Activated T-helper 1 cell treated with anti-CD3 and anti-CD28 coated beads, Interleukin-12 subunit alpha, Interleukin-12 subunit beta, Interleukin-2, Interleukin-4 antibody, amounts not matched to agents 30 ng/mL and 10 ng/mL and 1 ng/mL, durations not matched to agents 14 hours and 24 hours and 36 hours (primary cell): ENCODE measurements at regions of chrX and their contacts with region 1.

Region 1: GRCh38 chrX:9899640-9900111 is 67.5 kb upstream of the CLDN34 start:
- DNase-seq: no peak
- H3K4me3 Mint-ChIP-seq: no peak overlapping the region
- H3K27ac Mint-ChIP-seq: no peak overlapping the region
- H3K4me1 Mint-ChIP-seq: no peaks in the 10 kb centered on the region
- H3K27me3 Mint-ChIP-seq: peaks cover 20% of the 10 kb centered on the region

Region 2: DNA sequence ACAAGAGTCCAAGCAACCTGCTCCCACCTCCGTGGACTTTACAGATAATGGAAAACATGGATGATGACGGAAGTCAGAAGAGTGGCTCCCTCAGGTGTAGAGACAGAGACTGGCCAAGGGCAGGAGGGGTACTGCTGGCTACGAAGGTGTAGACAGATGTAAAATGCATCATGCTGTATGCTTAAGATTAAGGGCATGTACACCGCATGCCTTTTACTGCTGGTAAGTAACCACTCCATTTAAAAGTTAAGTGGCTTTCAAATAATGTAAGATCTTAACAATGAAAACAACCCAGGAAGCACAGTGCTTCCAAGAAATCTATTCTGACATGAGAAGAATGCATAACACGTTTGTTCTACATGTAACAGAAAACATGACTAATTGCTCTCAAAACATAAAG is 788.9 kb before region 1 on chrX:
- intact Hi-C with region 1: loop called (anchors 5 kb)
- DNase-seq: no peak
- H3K4me3 Mint-ChIP-seq: no peak overlapping the region
- H3K27ac Mint-ChIP-seq: no peak overlapping the region
- H3K4me1 Mint-ChIP-seq: no peaks in the 10 kb centered on the region
- H3K27me3 Mint-ChIP-seq: no peaks in the 10 kb centered on the region